IMR-90 (cell line): ENCODE measurements at regions of chr1 and their contacts with region 1.

Region 1: GRCh38 chr1:209827384-209828262 is at the start of gene UTP25:
- DNase-seq: peak; percentile 97
- ATAC-seq: peak; percentile 92
- H3K4me3 ChIP-seq: peak within 1 kb of the TSS; percentile 66
- H3K27ac ChIP-seq: peak within 1 kb of the TSS; percentile 61
- H3K4me1 ChIP-seq: peaks cover 4% of the 10 kb centered on the region; the same call in 1 of the 2 replicates
- H3K27me3 ChIP-seq: no peaks in the 10 kb centered on the region
- CTCF ChIP-seq: peak; percentile 76
- POLR2A ChIP-seq: no peak
- RAD21 ChIP-seq: peak; percentile 36
- total RNA-seq, gene UTP25: 17.2 and 17.4 TPM in 2 replicates

Region 2: DNA sequence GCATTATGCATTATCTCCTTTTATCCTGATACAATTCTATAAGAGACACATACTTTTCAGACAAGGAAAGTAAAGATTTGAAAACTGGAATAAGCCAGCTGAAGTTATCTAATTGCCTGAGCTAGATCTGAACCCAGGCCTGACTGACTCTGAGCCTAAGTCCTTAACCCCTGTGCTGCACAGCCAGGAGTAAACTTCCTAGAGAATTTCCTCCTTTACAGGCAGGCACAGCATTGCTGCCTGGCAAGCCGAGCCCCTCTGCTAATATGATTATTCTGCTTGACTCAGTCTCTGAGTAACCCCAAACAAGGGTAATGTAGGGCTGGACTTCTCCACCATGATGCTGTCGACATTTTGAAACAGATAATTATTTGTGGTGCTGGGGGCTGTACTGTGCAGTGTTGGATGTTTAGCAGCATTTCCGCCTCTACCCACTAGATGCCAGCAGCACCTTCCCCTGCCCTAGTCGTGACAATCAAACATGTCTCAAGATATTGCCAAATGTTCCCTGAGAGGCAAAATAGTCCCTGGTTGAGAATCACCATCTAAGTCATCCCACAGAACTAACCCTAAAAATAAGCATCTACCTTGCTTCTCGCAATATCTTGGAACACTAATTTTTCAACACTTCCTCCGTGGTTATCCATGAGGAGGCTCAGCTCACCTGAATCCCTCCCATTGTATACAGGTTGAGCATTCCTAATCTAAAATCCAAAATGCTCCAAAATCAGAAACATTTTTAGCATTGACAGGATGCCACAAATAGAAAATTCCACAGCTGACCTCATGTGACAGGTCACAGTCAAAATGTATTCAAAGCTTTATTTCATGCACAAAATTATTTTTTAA is 225.6 kb before region 1 on chr1:
- CTCF ChIA-PET with region 1: no interaction called
- POLR2A ChIA-PET with region 1: no interaction called
- dilution Hi-C with region 1: no loop called
- in situ Hi-C with region 1: no loop called
- intact Hi-C with region 1: loop called (anchors 5 kb)
- DNase-seq: peak; percentile 45
- ATAC-seq: peak; percentile 85
- H3K4me3 ChIP-seq: no peak overlapping the region
- H3K27ac ChIP-seq: no peak overlapping the region
- H3K4me1 ChIP-seq: no peaks in the 10 kb centered on the region
- H3K27me3 ChIP-seq: no peaks in the 10 kb centered on the region; the same call in 1 of the 2 replicates
- CTCF ChIP-seq: peak; percentile 60
- POLR2A ChIP-seq: no peak
- RAD21 ChIP-seq: peak; percentile 65

Region 3: GRCh38 chr1:209733409-209734192 is 94.0 kb before region 1 on chr1:
- CTCF ChIA-PET with region 1: no interaction called
- POLR2A ChIA-PET with region 1: no interaction called
- dilution Hi-C with region 1: no loop called
- in situ Hi-C with region 1: no loop called
- intact Hi-C with region 1: no loop called
- DNase-seq: no peak
- ATAC-seq: no peak
- H3K4me3 ChIP-seq: no peak overlapping the region
- H3K27ac ChIP-seq: no peak overlapping the region
- H3K4me1 ChIP-seq: peaks cover 1% of the 10 kb centered on the region; the same call in 1 of the 2 replicates
- H3K27me3 ChIP-seq: peaks cover 4% of the 10 kb centered on the region
- CTCF ChIP-seq: no peak
- POLR2A ChIP-seq: no peak
- RAD21 ChIP-seq: no peak

Region 4: GRCh38 chr1:209839875-209840491 is 12.4 kb after region 1 on chr1:
- CTCF ChIA-PET with region 1: interaction called, 8 read pairs
- POLR2A ChIA-PET with region 1: no interaction called
- dilution Hi-C with region 1: no loop called
- in situ Hi-C with region 1: no loop called
- intact Hi-C with region 1: loop called (anchors 1 kb)
- DNase-seq: peak; percentile 98
- ATAC-seq: peak; percentile 95
- H3K4me3 ChIP-seq: no peak overlapping the region; the same call in 1 of the 2 replicates
- H3K27ac ChIP-seq: peak overlapping the region; percentile 89
- H3K4me1 ChIP-seq: peaks cover 18% of the 10 kb centered on the region
- H3K27me3 ChIP-seq: no peaks in the 10 kb centered on the region
- CTCF ChIP-seq: no peak
- POLR2A ChIP-seq: 0 out of 2 replicates have a peak, but pooled peaks have one; percentile 30
- RAD21 ChIP-seq: no peak; the same call in 1 of the 2 replicates

Region 5: GRCh38 chr1:209850342-209850979 is 22.8 kb after region 1 on chr1:
- CTCF ChIA-PET with region 1: interaction called, 6 read pairs
- POLR2A ChIA-PET with region 1: interaction called, 13 read pairs
- dilution Hi-C with region 1: no loop called
- in situ Hi-C with region 1: no loop called
- intact Hi-C with region 1: no loop called
- DNase-seq: peak; percentile 45
- ATAC-seq: peak; percentile 65
- H3K4me3 ChIP-seq: no peak overlapping the region
- H3K27ac ChIP-seq: no peak overlapping the region
- H3K4me1 ChIP-seq: no peaks in the 10 kb centered on the region
- H3K27me3 ChIP-seq: no peaks in the 10 kb centered on the region
- CTCF ChIP-seq: peak; percentile 55
- POLR2A ChIP-seq: no peak
- RAD21 ChIP-seq: peak; percentile 51

Region 6: GRCh38 chr1:209860293-209860881 is 32.8 kb after region 1 on chr1:
- CTCF ChIA-PET with region 1: interaction called, 12 read pairs
- POLR2A ChIA-PET with region 1: no interaction called
- dilution Hi-C with region 1: no loop called
- in situ Hi-C with region 1: no loop called
- intact Hi-C with region 1: no loop called
- DNase-seq: peak; percentile 86
- ATAC-seq: peak; percentile 96
- H3K4me3 ChIP-seq: no peak overlapping the region
- H3K27ac ChIP-seq: no peak overlapping the region
- H3K4me1 ChIP-seq: peaks cover 3% of the 10 kb centered on the region; the same call in 1 of the 2 replicates
- H3K27me3 ChIP-seq: peaks cover 2% of the 10 kb centered on the region
- CTCF ChIP-seq: peak; percentile 90
- POLR2A ChIP-seq: no peak
- RAD21 ChIP-seq: peak; percentile 87

Region 7: DNA sequence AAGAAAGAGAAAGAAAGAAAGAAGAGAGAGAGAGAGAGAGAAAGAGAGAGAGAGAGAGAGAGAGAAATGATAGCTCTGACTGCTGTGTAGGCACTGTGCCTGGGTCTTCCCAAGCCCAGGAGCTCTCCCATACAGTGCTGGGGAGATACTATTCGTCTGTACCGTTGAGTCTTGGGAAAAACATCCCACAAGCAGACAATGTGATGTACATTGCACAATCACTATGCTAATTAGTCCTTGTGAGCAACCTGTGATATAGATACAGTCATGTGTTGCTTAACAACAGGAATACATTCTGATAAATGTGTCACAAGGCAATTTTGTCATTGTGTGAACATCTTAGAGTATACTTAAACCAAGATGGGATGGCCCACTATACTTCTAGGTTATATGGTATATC is 882.1 kb after region 1 on chr1:
- CTCF ChIA-PET with region 1: no interaction called
- POLR2A ChIA-PET with region 1: no interaction called
- dilution Hi-C with region 1: no loop called
- in situ Hi-C with region 1: no loop called
- intact Hi-C with region 1: loop called (anchors 10 kb)
- DNase-seq: no peak
- ATAC-seq: no peak
- H3K4me3 ChIP-seq: no peak overlapping the region
- H3K27ac ChIP-seq: no peak overlapping the region
- H3K4me1 ChIP-seq: no peaks in the 10 kb centered on the region
- H3K27me3 ChIP-seq: no peaks in the 10 kb centered on the region
- CTCF ChIP-seq: no peak
- POLR2A ChIP-seq: no peak
- RAD21 ChIP-seq: no peak